ENCODE measurements at regions of chr4 and their contacts with region 1.

Region 1: DNA sequence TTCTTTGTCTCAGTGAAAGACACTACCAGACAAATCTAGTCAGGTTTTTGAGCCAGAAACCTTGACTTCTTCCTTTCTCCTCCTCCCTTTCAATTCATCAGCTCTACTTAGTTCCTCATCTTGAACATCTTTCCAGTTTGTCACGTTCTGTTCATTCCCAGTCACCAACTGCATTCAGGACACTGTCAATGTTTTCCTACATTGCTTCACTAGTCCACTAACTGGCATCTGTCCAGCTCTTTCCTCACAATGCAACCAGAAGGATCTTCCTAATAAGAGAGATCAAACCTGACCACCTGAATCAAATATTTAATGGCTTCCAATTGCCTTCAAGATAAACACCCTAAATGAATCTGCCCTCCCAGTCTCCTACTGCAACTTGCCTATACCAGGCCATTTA is 52.5 kb downstream of the SYNPO2 start:
- DNase-seq: peak in 3 of 5 donors; percentile 40 to 74 (median 51)
- H3K4me3 ChIP-seq: no peak overlapping the region
- H3K27ac ChIP-seq: peak overlapping the region; percentile 44 to 53
- H3K4me1 ChIP-seq: peaks cover 27% of the 10 kb centered on the region
- H3K27me3 ChIP-seq: no peaks in the 10 kb centered on the region
- CTCF ChIP-seq: no peak
- EP300 ChIP-seq: no peak
- POLR2A ChIP-seq: no peak

Region 2: DNA sequence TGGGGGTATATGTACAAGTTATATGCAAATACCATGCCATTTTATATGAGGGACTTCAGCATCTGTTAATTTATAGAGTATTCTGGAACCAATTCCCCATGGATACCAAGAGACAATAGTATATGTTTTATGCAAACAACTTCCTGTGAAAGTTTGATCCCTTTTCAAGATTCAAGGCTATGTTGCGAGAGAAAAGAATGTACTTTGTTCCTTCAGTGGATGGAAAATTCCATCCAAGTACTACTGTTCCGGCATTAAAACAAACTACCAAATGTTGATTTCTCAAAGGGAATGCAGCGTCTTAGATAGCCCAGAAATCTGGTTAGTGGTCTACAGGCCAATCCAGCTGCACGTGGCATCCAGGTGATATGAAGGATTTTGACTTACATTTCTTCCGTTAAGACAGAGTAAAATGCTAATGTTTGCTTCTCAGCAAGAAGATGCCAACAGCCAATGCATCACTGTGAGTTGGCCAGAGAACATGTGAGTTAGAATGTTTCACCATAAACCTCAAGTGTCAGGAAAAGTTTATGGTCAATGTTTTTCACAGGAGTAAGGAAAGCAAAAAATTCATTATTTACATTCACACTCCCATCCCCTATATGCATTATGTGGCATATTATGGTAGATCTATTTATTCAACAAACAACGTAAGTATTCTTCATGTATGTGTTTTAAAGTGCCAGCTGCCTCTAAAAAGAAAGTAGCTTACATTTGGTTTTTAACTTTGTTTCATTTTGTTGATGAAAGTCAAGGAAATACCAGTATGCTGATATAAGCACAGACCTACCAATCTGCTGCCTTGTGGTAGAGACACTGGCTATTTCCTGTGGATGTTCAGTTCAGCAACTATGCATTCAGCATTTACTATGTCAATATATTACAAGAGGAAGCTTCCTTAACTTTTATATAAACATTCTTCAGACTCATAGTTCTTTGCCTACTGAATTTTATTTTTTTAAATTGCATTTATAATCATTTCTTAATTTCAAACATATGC is 211.6 kb before region 1 on chr4:
- intact Hi-C with region 1: no loop called
- DNase-seq: no peak
- H3K4me3 ChIP-seq: no peak overlapping the region
- H3K27ac ChIP-seq: no peak overlapping the region
- H3K4me1 ChIP-seq: no peaks in the 10 kb centered on the region
- H3K27me3 ChIP-seq: no peaks in the 10 kb centered on the region
- CTCF ChIP-seq: no peak
- EP300 ChIP-seq: no peak
- POLR2A ChIP-seq: no peak

Region 3: GRCh38 chr4:118898684-118899138 is 42.4 kb before region 1 on chr4:
- intact Hi-C with region 1: loop called in 1 of 4 experiments (anchors 10 kb)
- DNase-seq: peak; percentile 46 to 76 (median 62)
- H3K4me3 ChIP-seq: no peak overlapping the region
- H3K27ac ChIP-seq: peak overlapping the region; percentile 42 to 53
- H3K4me1 ChIP-seq: peaks cover 15% of the 10 kb centered on the region
- H3K27me3 ChIP-seq: no peaks in the 10 kb centered on the region
- CTCF ChIP-seq: no peak
- EP300 ChIP-seq: no peak
- POLR2A ChIP-seq: no peak